ENCODE measurements at regions of chr10 and their contacts with region 1.

Region 1: DNA sequence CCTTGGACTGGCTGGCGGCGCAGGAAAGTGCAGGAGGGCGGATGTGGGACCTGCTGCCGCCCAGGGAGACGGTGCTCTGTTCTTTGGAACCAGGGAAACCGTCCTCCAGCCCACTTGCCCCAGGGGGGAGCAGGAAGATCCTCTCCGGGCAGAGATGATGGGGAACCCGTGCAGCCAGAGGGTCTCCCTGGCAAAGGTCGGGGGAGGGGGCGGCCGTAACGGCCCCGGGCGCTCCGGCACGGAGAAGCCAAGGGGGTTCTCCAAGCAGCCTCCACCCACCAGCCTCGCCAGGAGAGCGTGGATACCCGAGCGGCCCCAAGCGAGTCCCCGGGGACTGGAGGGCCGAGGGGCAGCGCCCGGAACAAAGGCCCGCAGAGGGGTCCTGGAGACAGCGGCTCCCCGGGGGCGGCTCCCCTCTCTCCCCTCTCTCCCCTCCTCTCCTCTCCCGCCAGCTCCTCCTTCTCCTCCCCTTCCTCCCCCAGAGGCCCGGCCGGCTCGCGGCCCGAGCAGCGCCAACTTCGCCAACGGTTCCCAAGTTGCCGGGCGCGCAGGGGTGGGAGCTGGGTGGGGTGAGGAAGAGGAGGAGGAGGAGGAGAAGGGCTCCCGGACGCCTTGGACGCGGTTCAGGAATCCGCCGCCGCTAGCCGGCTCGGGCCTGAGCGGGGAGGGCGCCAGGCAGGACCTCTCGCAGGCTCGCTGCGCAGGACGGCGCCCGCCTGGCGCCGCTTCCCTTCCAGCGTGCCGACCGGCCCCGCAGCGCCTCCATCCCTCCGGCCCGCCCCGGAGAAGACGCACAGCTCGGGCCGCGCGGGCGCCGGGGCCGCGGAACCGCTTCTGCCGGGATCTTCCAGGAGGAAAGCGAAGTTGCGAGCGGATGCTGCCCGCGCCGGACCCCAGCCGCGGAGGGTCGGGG is at the start of gene CHST3:
- DNase-seq: peak; percentile 87 to 94
- ATAC-seq: peak; percentile 86
- H3K4me3 ChIP-seq: peak within 1 kb of the TSS; percentile 74 to 85
- H3K27ac ChIP-seq: peak within 1 kb of the TSS; percentile 94 to 98
- H3K4me1 ChIP-seq: no peaks in the 10 kb centered on the region
- H3K27me3 ChIP-seq: no peaks in the 10 kb centered on the region
- total RNA-seq, gene CHST3: 30.5 to 47.9 TPM

Region 2: GRCh38 chr10:71868192-71868697 is 95.8 kb before region 1 on chr10:
- intact Hi-C with region 1: no loop called
- DNase-seq: peak; percentile 74 to 85
- ATAC-seq: peak; percentile 71
- H3K4me3 ChIP-seq: no peak overlapping the region
- H3K27ac ChIP-seq: no peak overlapping the region
- H3K4me1 ChIP-seq: no peaks in the 10 kb centered on the region
- H3K27me3 ChIP-seq: no peaks in the 10 kb centered on the region

Region 3: DNA sequence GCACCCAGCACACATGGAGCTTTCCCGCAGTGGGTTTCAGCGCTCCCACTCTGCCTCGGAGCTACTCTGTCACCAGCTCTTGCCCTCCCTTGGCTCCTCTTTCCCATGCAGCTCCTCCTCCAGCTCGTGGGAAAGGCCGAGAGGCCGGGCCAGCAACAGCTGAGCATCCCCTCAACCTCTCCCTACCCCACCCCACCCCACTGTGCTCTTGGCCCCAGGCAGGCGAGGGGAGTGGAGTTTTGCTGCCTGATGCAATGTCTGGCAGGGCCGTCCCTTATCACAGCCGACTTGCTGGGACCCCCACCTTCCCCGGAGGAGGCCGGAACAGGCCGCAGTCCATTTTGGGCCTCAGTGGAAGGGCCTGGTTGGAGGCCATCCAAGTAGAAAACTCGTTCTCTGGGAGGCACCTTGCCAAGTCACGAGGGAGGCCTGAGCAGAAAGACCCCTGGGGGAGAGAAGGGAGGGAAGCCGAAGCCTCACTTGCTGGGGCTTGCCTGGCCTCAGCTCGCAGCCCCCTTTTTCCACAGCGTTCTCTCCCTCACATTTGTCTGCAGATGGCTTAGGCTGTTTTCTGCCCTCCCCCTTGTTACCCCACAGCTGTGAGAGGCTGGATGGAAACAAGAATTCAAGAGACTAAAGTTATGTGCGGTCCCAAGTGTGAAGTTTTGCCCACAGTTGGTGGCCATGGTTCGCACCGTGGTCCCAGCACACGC is 35.5 kb after region 1 on chr10:
- intact Hi-C with region 1: loop called in 1 of 2 experiments (anchors 2 kb)
- DNase-seq: peak; percentile 83 to 90
- ATAC-seq: peak; percentile 82
- H3K4me3 ChIP-seq: no peak overlapping the region
- H3K27ac ChIP-seq: peak overlapping the region; percentile 29 to 53
- H3K4me1 ChIP-seq: peaks cover 2 to 17% of the 10 kb centered on the region in 2 donors
- H3K27me3 ChIP-seq: no peaks in the 10 kb centered on the region

Region 4: DNA sequence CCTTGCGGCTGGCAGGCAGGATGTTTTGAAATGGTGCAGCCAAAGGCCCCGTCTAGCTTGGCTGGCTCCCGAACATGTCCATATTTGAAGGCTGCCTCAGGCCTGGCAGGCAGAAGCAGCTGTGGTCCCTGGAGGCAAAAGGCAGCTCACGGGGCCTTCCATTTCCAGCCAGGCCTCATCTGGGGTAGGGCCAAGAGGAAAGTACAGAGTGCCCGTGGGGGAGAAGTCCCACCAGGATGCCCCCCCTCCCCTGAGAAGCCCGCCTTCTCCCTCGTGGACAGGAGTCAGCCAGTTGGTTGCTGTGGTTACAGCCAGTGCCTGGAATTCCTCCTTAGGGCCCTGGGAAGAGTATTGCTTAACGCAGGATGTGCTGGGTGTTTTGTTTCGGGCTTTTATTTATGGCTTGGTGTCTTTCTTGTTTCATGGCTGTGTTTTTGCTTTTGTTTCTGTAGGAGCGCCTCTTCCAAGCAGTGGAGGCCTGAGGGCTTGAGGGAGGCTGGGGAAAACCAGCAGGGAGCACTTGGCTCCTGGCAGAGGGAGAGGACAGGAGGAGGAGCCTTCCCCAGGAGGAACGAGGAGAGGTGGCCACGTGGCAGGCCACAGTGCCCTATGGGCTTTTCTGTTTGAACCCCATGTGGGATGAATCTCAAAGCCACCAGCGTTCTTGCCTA is 45.5 kb after region 1 on chr10:
- intact Hi-C with region 1: loop called (anchors 2 to 5 kb)
- DNase-seq: peak; percentile 96 to 97
- ATAC-seq: peak; percentile 94
- H3K4me3 ChIP-seq: no peak overlapping the region
- H3K27ac ChIP-seq: peak overlapping the region; percentile 43 to 85
- H3K4me1 ChIP-seq: peaks cover 0 to 4% of the 10 kb centered on the region in 2 donors
- H3K27me3 ChIP-seq: no peaks in the 10 kb centered on the region

Region 5: DNA sequence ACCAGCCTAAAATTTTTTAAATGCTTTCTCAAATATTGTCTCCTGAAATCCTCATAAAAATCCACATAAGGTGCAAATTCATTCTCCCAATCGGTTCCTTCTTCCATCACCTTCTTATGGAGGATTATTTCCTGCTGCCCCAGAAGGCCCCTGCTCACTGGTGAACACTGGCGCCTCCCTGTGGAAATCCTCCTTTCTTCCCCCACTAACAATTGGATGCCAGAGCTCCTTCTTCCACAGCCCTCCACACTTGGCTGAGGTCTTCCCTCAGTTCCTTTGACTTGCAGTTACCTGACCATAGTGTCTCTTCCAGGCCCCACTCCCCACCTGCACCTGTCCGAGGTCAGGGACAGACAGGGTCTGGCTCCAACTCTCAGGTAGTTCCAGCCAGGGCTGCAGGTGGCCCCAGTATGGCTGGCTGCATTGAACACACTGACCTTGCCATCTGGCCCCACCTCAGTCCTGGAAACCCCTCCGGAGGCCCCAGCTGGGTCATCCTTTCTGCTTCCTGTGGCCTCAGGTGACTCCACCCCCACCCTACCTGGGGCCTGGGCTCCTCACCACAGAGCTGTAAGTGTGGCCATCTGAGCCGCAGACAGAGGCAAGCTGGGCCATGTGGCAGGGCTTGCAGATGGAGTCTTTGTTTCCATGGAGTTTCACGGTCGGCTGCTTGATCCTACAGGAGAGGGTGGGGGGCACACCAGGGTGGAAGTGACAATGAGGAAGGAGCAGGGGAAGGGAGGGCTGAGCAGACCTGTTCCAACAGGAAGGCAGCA is 105.9 kb after region 1 on chr10:
- intact Hi-C with region 1: no loop called
- DNase-seq: peak in 1 of 2 donors; percentile 33
- ATAC-seq: no peak
- H3K4me3 ChIP-seq: no peak overlapping the region
- H3K27ac ChIP-seq: no peak overlapping the region
- H3K4me1 ChIP-seq: no peaks in the 10 kb centered on the region
- H3K27me3 ChIP-seq: no peaks in the 10 kb centered on the region

Measured in aorta (tissue), 5 donors.